Activated CD4-positive, alpha-beta memory T cell treated with anti-CD3 and anti-CD28 coated beads, Interleukin-2, amount 10 ng/mL, durations not matched to agents 7 days and 5 days (primary cell): ENCODE measurements at regions of chr6 and their contacts with region 1.

Region 1: GRCh38 chr6:25027221-25027916 is 91.6 kb upstream of the RIPOR2 start:
- DNase-seq: peak; percentile 89
- H3K4me3 Mint-ChIP-seq: peak overlapping the region; percentile 67
- H3K27ac Mint-ChIP-seq: peak overlapping the region; percentile 81
- H3K4me1 Mint-ChIP-seq: peaks cover 57% of the 10 kb centered on the region
- H3K27me3 Mint-ChIP-seq: no peaks in the 10 kb centered on the region

Region 2: DNA sequence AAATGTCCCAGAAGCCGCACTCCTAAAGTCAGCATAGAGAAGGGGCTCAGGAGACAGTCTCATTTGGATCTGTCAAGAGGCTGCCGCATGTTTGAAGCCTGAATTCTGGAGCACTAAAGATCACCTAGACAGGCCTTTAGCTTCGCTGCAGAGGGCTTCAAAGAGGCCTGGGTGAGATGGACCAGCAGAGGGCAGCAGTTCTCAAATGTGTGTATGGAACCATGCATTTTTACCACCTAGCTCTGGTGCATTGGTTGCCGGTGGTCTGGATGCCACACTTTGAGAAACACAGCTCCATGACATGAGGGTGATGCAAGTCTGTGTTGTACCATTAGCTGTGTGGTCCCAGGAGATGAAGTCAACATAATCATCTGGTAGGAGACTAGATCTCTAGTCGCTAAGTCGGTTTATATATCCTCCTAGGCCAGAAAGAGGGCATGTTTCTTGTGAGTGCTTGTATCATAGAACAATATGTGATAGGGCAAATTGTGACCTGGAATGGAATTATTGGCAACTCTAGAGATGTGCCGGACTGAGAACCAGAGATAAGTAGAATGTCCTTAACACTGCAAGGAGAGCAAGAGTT is 446.2 kb before region 1 on chr6:
- CTCF ChIA-PET with region 1: interaction called, 12 read pairs
- POLR2A ChIA-PET with region 1: no interaction called
- DNase-seq: peak; percentile 77
- H3K4me3 Mint-ChIP-seq: no peak overlapping the region
- H3K27ac Mint-ChIP-seq: no peak overlapping the region
- H3K4me1 Mint-ChIP-seq: peaks cover 3% of the 10 kb centered on the region
- H3K27me3 Mint-ChIP-seq: peaks cover 11% of the 10 kb centered on the region

Region 3: GRCh38 chr6:24855395-24856245 is 171.7 kb before region 1 on chr6:
- CTCF ChIA-PET with region 1: interaction called, 54 read pairs
- POLR2A ChIA-PET with region 1: interaction called, 37 read pairs
- DNase-seq: peak; percentile 75
- H3K4me3 Mint-ChIP-seq: no peak overlapping the region
- H3K27ac Mint-ChIP-seq: peak overlapping the region; percentile 90
- H3K4me1 Mint-ChIP-seq: peaks cover 55% of the 10 kb centered on the region
- H3K27me3 Mint-ChIP-seq: no peaks in the 10 kb centered on the region

Region 4: DNA sequence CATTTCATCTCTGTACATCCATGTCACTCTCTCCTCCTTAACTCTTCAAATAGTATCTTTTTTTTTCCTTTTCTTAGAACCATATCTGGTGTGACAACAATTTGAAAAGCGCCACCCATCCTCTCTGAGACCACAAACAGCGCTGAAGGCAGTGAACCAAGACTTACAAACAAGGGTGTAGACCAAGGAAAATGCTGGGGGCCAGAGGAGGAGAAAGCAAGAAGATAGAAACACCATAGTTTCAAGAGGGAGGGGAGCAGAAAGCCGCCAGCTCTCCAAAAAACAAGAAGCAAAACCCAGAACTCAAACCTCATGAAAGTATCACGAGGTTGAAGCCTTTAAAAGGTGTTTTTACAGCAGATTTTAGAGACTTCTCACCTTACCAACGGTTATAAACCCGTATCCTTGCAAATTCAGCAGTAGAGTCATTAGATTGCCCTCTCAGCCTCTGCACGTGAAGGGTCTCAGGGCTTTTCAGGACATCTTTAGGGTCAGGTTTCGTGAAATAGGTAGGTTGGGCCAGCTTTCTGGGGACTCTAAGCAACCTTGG is 78.3 kb before region 1 on chr6:
- CTCF ChIA-PET with region 1: interaction called, 5 read pairs
- POLR2A ChIA-PET with region 1: interaction called, 14 read pairs
- DNase-seq: peak; percentile 85
- H3K4me3 Mint-ChIP-seq: peak overlapping the region; percentile 40
- H3K27ac Mint-ChIP-seq: peak overlapping the region; percentile 95
- H3K4me1 Mint-ChIP-seq: peaks cover 74% of the 10 kb centered on the region
- H3K27me3 Mint-ChIP-seq: no peaks in the 10 kb centered on the region

Region 5: GRCh38 chr6:25042036-25042521 is 14.7 kb after region 1 on chr6:
- CTCF ChIA-PET with region 1: interaction called, 132 read pairs
- POLR2A ChIA-PET with region 1: interaction called, 188 read pairs
- DNase-seq: peak; percentile 54
- H3K4me3 Mint-ChIP-seq: peak overlapping the region; percentile 92
- H3K27ac Mint-ChIP-seq: peak overlapping the region; percentile 96
- H3K4me1 Mint-ChIP-seq: peaks cover 56% of the 10 kb centered on the region
- H3K27me3 Mint-ChIP-seq: no peaks in the 10 kb centered on the region

Region 6: GRCh38 chr6:25061289-25061936 is 34.0 kb after region 1 on chr6:
- CTCF ChIA-PET with region 1: interaction called, 196 read pairs
- POLR2A ChIA-PET with region 1: interaction called, 24 read pairs
- DNase-seq: no peak
- H3K4me3 Mint-ChIP-seq: no peak overlapping the region
- H3K27ac Mint-ChIP-seq: no peak overlapping the region
- H3K4me1 Mint-ChIP-seq: peaks cover 24% of the 10 kb centered on the region
- H3K27me3 Mint-ChIP-seq: no peaks in the 10 kb centered on the region

Region 7: DNA sequence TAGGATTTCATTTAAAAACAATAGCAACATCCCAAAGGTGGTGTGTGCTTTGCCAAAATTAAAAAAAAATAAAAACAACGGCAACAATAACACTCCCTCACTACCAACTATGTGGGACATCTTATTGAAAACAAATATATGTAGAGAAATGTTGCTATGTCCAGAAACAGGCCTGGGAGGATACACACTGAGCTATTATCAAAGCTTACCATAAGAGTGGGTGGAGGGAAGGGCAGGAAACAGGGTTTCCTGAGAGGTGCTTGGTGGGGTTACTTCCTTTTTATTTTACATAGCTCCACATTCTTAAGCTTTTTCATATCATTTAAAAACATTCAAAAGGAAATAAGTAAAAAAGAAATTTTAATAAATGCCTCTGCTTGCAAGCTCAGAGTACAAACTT is 58.4 kb after region 1 on chr6:
- CTCF ChIA-PET with region 1: interaction called, 12 read pairs
- POLR2A ChIA-PET with region 1: interaction called, 5 read pairs
- DNase-seq: no peak
- H3K4me3 Mint-ChIP-seq: peak overlapping the region; percentile 15
- H3K27ac Mint-ChIP-seq: peak overlapping the region; percentile 51
- H3K4me1 Mint-ChIP-seq: peaks cover 29% of the 10 kb centered on the region
- H3K27me3 Mint-ChIP-seq: no peaks in the 10 kb centered on the region